Naive thymus-derived CD4-positive, alpha-beta T cell (primary cell): ENCODE measurements at regions of chr2 and their contacts with region 1.

Region 1: DNA sequence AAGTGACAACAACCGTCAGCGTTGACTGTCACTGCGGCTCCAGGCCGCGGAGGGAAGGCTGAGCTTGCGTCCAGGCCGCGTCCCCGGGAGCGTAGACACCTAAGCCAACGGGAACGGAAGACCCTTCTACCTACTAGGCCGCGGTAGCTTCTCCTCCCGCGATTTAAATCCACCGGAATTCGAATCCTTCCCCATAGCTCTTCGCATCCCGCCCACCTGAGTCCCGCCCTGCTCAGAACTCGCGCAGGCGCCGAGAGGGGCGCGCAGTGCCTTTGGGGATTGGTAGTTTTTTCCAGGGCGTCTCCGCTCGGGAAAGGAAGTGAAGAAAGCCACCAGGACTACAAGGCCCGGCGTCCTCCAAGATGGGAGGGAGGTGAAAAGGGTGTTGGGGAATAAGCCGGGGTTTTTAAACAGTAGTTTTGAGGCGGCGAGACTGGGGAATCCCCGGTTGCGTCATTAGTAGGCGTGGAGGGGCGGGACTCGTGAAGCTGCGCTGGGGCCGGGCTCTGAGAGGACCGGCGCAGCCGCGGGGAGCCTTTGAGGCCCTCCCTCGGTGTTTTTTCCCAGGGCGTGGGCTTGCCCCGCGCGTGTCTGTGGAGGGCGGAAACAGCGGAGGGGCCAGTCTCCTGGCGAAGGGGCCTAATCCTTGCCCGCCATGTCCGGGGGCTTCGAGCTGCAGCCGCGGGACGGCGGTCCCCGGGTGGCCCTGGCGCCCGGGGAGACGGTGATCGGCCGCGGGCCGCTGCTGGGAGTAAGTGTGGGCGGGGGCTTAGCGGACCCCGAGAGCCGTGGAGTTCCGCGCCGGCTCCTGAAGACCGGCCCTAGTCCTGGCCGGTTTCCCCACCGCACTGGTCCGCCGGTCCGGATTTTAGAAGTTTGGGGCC is at the starts of genes APLF and FBXO48:
- DNase-seq: peak; percentile 90 to 99 (median 99)
- ATAC-seq: peak; percentile 94
- H3K4me3 ChIP-seq: peak within 1 kb of the TSS; percentile 99
- H3K4me3 Mint-ChIP-seq: peak within 1 kb of the TSS; percentile 88 to 99 (median 94)
- H3K27ac ChIP-seq: peak within 1 kb of the TSS; percentile 89
- H3K27ac Mint-ChIP-seq: peak within 1 kb of the TSS; percentile 80 to 97 (median 89)
- H3K4me1 ChIP-seq: peaks cover 7 to 23% of the 10 kb centered on the region in 2 donors
- H3K4me1 Mint-ChIP-seq: peaks cover 10 to 55% (median 39%) of the 10 kb centered on the region in 7 donors
- H3K27me3 ChIP-seq: no peaks in the 10 kb centered on the region
- H3K27me3 Mint-ChIP-seq: no peaks in the 10 kb centered on the region
- total RNA-seq, gene APLF: 2.9 to 8.9 (median 3.8) TPM
- total RNA-seq, gene FBXO48: 1.1 to 5.6 (median 1.7) TPM

Region 2: GRCh38 chr2:67397143-67397986 is 1070.0 kb before region 1 on chr2 and contains the start of gene ETAA1:
- CTCF ChIA-PET with region 1: no interaction called
- POLR2A ChIA-PET with region 1: no interaction called
- intact Hi-C with region 1: loop called in 1 of 2 experiments (anchors 5 kb)
- DNase-seq: peak; percentile 90 to 94 (median 92)
- ATAC-seq: peak; percentile 99
- H3K4me3 ChIP-seq: peak within 1 kb of the TSS; percentile 98
- H3K4me3 Mint-ChIP-seq: peak within 1 kb of the TSS; percentile 92 to 99 (median 97)
- H3K27ac ChIP-seq: peak within 1 kb of the TSS; percentile 87
- H3K27ac Mint-ChIP-seq: peak within 1 kb of the TSS; percentile 97 to 99 (median 98)
- H3K4me1 ChIP-seq: no peaks in the 10 kb centered on the region
- H3K4me1 Mint-ChIP-seq: peaks cover 9 to 26% (median 18%) of the 10 kb centered on the region in 7 donors
- H3K27me3 ChIP-seq: no peaks in the 10 kb centered on the region
- H3K27me3 Mint-ChIP-seq: no peaks in the 10 kb centered on the region
- total RNA-seq, gene ETAA1: 6.6 to 16.4 (median 10.0) TPM

Region 3: DNA sequence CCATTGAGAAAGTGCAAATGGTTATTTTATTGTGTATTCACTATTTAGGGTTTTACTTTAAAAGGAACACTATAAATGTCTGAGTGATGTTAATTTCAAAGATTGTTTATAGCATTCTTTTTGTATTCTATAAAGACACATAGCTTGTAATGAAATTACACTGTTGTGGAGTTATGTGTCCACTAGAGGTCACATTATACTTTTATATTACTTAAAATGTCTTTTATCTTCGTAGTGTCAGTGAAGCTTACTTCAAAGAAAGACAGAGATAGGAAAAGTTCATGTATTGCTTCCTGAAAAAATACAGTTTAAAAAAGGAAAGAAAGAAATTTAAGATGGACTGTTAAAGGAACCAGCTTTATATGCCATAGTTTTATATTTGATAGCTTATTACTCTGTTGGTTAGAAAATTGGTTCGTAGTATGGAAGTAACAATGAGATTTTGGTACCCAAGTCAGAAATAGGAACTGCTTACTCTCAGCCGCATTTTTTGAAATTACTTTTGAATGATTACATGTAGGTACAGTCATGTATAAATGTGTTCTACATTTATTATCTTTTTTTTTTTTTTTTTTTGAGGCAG is 20.5 kb after region 1 on chr2:
- CTCF ChIA-PET with region 1: interaction called, 16 read pairs
- POLR2A ChIA-PET with region 1: no interaction called
- intact Hi-C with region 1: loop called (anchors 1 to 2 kb)
- DNase-seq: peak in 4 of 9 donors; percentile 22 to 38 (median 28)
- ATAC-seq: peak; percentile 72
- H3K4me3 ChIP-seq: no peak overlapping the region
- H3K4me3 Mint-ChIP-seq: no peak overlapping the region
- H3K27ac ChIP-seq: no peak overlapping the region
- H3K27ac Mint-ChIP-seq: no peak overlapping the region
- H3K4me1 ChIP-seq: no peaks in the 10 kb centered on the region
- H3K4me1 Mint-ChIP-seq: peaks cover 0 to 5% (median 2%) of the 10 kb centered on the region in 7 donors
- H3K27me3 ChIP-seq: no peaks in the 10 kb centered on the region
- H3K27me3 Mint-ChIP-seq: no peaks in the 10 kb centered on the region

Region 4: DNA sequence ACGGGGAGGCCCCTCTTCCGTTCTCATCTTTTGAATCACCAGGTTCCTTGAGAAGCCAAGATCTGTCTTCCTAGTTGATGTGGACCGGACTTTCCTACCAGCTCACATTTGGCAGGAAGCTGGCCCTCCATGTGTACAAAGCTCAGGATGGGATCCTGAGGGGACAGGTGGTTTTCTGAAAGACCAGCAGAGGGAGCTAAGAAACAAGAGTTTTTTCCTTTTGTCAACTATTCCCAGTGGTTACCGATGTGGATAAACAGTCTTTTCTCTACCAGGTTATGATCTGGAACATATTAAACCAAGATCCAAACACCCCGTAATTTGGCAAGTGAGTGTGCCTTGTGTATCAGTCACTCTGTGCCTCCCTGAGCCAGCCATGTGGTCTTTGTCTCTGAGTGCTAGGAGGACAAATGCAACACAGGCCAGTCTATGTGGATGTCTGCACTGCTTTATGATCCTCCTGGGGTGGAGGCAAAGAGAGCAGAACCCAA is 242.1 kb after region 1 on chr2:
- CTCF ChIA-PET with region 1: interaction called, 16 read pairs
- POLR2A ChIA-PET with region 1: no interaction called
- intact Hi-C with region 1: loop called in 1 of 2 experiments (anchors 1 kb)
- DNase-seq: peak in 7 of 9 donors; percentile 14 to 41 (median 37)
- ATAC-seq: peak; percentile 66
- H3K4me3 ChIP-seq: no peak overlapping the region
- H3K4me3 Mint-ChIP-seq: peak overlapping the region in 5 of 10 donors; percentile 10 to 75 (median 55)
- H3K27ac ChIP-seq: no peak overlapping the region
- H3K27ac Mint-ChIP-seq: peak overlapping the region in 6 of 9 donors; percentile 22 to 74 (median 42)
- H3K4me1 ChIP-seq: peaks cover under 1 to 3% of the 10 kb centered on the region in 2 donors
- H3K4me1 Mint-ChIP-seq: peaks cover 5 to 32% (median 26%) of the 10 kb centered on the region in 7 donors
- H3K27me3 ChIP-seq: no peaks in the 10 kb centered on the region
- H3K27me3 Mint-ChIP-seq: peaks cover 0 to 16% (median 0%) of the 10 kb centered on the region in 5 donors

Region 5: GRCh38 chr2:68766376-68766845 is 299.1 kb after region 1 on chr2:
- CTCF ChIA-PET with region 1: interaction called, 4 read pairs
- POLR2A ChIA-PET with region 1: interaction called, 7 read pairs
- intact Hi-C with region 1: loop called (anchors 2 kb)
- DNase-seq: peak; percentile 27 to 85 (median 78)
- ATAC-seq: peak; percentile 86
- H3K4me3 ChIP-seq: peak overlapping the region; percentile 36
- H3K4me3 Mint-ChIP-seq: peak overlapping the region; percentile 77 to 94 (median 82)
- H3K27ac ChIP-seq: peak overlapping the region; percentile 82
- H3K27ac Mint-ChIP-seq: peak overlapping the region in 8 of 9 donors; percentile 93 to 99 (median 97)
- H3K4me1 ChIP-seq: peaks cover 97 to 98% of the 10 kb centered on the region in 2 donors
- H3K4me1 Mint-ChIP-seq: peaks cover 70 to 100% (median 99%) of the 10 kb centered on the region in 7 donors
- H3K27me3 ChIP-seq: no peaks in the 10 kb centered on the region
- H3K27me3 Mint-ChIP-seq: no peaks in the 10 kb centered on the region

Region 6: GRCh38 chr2:68925295-68925896 is 458.1 kb after region 1 on chr2:
- CTCF ChIA-PET with region 1: interaction called, 76 read pairs
- POLR2A ChIA-PET with region 1: interaction called, 3 read pairs
- intact Hi-C with region 1: loop called (anchors 1 kb)
- DNase-seq: peak in 7 of 9 donors; percentile 40 to 70 (median 63)
- ATAC-seq: peak; percentile 84
- H3K4me3 ChIP-seq: no peak overlapping the region
- H3K4me3 Mint-ChIP-seq: no peak overlapping the region
- H3K27ac ChIP-seq: no peak overlapping the region
- H3K27ac Mint-ChIP-seq: peak overlapping the region in 2 of 9 donors; percentile 48 to 53
- H3K4me1 ChIP-seq: no peaks in the 10 kb centered on the region
- H3K4me1 Mint-ChIP-seq: peaks cover 0 to 8% (median 0%) of the 10 kb centered on the region in 7 donors
- H3K27me3 ChIP-seq: no peaks in the 10 kb centered on the region
- H3K27me3 Mint-ChIP-seq: peaks cover 0 to 31% (median 4%) of the 10 kb centered on the region in 5 donors